Activated CD8-positive, alpha-beta memory T cell treated with anti-CD3 and anti-CD28 coated beads, Interleukin-2, amount 10 ng/mL, durations not matched to agents 7 days and 5 days (primary cell): ENCODE measurements at regions of chr2 and their contacts with region 1.

Region 1: GRCh38 chr2:75608684-75609333 is 37.8 kb upstream of the MRPL19 start:
- DNase-seq: peak; percentile 50
- ATAC-seq: peak; percentile 69
- H3K4me3 Mint-ChIP-seq: no peak overlapping the region
- H3K27ac Mint-ChIP-seq: no peak overlapping the region
- H3K4me1 Mint-ChIP-seq: no peaks in the 10 kb centered on the region
- H3K27me3 Mint-ChIP-seq: peaks cover 46% of the 10 kb centered on the region

Region 2: DNA sequence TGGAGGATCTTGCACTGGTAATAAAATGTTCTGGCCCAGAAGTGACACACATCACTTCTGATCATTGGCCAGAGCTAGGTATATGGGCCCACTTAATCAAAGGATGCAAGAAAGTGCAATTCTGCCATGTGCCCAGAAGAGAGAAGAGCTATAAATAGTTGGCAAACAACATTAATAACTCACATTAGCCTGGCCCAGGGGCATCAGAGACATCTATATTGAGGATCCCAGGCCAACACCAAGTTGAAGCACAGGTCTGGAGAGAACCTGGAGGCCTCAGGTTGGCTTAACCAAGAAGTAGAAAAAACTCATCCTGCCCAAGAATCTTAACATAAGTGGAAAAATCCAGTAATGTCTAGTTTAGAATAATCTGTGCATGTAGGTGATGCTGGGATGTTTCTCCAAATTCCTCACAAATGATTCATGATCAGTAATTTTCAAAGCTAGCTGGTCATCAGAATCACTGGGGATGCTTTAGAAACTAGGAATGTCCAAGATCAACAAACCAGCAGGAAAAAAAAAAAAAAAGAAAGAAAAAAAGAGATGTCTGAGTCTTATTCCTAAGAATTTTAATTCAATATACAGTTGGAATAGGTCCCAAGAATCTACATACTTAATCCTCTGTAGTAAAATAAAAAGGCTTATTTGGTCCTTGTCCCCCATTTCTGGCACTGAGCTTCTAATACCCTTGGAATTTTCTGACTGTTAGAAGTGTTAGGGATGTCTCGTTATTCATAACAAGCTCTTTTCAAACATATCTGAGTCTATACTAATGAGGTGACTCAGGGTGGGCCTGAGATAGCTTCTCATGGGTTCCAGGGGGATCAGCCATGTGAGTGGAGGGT is 13.0 kb before region 1 on chr2:
- CTCF ChIA-PET with region 1: interaction called, 12 read pairs
- DNase-seq: no peak
- ATAC-seq: no peak
- H3K4me3 Mint-ChIP-seq: no peak overlapping the region
- H3K27ac Mint-ChIP-seq: no peak overlapping the region
- H3K4me1 Mint-ChIP-seq: no peaks in the 10 kb centered on the region
- H3K27me3 Mint-ChIP-seq: peaks cover 6% of the 10 kb centered on the region

Region 3: DNA sequence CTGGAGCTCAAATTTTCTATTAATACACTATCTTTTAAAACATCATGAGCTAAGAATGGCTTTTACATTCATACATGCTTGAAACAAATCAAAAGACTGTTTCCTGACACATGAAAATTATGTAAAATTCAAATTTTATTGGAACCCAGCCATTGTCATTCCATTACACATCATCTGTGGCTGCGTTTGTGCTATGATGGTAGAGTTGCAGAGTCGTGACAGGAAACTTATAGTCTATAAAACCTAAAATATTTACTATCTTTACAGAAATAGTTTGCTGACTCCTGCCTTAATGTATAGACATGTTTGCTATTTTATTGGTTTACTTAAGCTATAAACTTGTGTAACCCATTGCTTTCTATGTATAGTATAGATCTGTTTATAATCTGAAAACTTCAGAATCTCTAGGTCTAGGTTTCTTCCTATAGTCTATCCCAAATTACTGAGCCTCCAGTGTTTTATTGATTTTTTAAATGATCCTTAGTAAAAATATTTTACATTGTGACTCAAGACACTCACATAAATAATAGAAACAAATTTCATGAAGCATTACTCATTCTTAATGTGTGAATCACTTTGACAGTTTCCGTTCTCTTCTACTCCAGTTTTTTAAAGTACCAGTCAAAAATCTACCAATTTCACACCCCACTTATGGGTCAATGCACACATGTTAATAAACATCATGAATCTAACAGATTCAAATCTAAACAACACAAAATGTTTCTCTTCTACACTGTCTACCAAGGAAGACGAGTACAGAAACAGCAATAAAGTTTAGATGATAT is 11.3 kb after region 1 on chr2:
- CTCF ChIA-PET with region 1: interaction called, 12 read pairs
- DNase-seq: no peak
- ATAC-seq: no peak
- H3K4me3 Mint-ChIP-seq: no peak overlapping the region
- H3K27ac Mint-ChIP-seq: no peak overlapping the region
- H3K4me1 Mint-ChIP-seq: no peaks in the 10 kb centered on the region
- H3K27me3 Mint-ChIP-seq: peaks cover 33% of the 10 kb centered on the region